ENCODE measurements at regions of chr19 and their contacts with region 1.

Region 1: DNA sequence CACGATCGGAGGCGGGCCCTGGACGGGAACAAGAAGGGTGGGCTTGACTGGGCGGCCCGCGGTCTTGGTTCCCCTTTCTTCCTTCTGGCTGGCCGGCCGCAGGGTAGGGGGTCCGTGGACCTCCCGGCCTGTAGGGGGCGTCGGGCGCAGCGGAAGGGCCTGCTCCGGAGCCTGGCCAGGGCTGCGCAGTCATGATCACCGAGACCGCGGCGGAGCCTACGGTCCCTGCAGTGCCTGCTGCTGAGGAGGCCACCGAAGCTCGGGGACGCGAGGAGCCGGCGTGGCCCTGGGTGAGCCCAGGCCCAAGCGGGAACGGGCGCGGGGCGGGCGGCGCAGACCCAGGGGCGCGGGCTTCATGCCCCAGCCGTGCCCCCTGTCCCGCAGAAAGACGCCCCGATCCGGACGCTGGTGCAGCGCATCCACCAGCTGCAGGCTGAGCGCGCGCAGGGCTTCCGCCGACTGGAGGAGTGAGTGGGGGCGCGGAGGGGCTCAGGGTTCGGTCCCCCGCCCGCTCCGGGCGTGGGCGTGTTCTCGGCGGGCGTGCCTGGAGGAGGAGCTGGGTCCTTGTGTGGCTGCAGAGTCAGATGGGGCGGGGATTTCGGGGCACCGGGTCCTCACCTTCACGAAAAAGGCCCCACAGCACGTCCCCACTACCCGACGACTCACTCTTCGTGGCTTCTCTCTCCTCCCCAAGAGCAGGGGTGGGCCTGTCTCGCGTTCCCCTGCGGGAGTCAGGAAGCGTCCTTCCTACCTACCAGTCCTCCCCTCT is at the start of gene REX1BD:
- DNase-seq: peak; percentile 83
- H3K4me3 Mint-ChIP-seq: peak within 1 kb of the TSS; percentile 85
- H3K27ac Mint-ChIP-seq: peak within 1 kb of the TSS; percentile 90
- H3K4me1 Mint-ChIP-seq: peaks cover 49% of the 10 kb centered on the region
- H3K27me3 Mint-ChIP-seq: peaks cover 2% of the 10 kb centered on the region
- total RNA-seq, gene REX1BD: 81.2 to 83.3 TPM

Region 2: GRCh38 chr19:18259893-18260292 is 328.9 kb before region 1 on chr19:
- CTCF ChIA-PET with region 1: no interaction called
- POLR2A ChIA-PET with region 1: no interaction called
- DNase-seq: no peak
- H3K4me3 Mint-ChIP-seq: no peak overlapping the region
- H3K27ac Mint-ChIP-seq: no peak overlapping the region
- H3K4me1 Mint-ChIP-seq: peaks cover 2% of the 10 kb centered on the region
- H3K27me3 Mint-ChIP-seq: peaks cover 3% of the 10 kb centered on the region

Region 3: GRCh38 chr19:18419195-18419698 is 169.5 kb before region 1 on chr19 and contains the start of gene SSBP4:
- CTCF ChIA-PET with region 1: no interaction called
- POLR2A ChIA-PET with region 1: no interaction called
- DNase-seq: peak; percentile 79
- H3K4me3 Mint-ChIP-seq: peak within 1 kb of the TSS; percentile 94
- H3K27ac Mint-ChIP-seq: peak within 1 kb of the TSS; percentile 91
- H3K4me1 Mint-ChIP-seq: peaks cover 84% of the 10 kb centered on the region
- H3K27me3 Mint-ChIP-seq: peaks cover 11% of the 10 kb centered on the region
- total RNA-seq, gene SSBP4: 140 to 153 TPM

Region 4: GRCh38 chr19:18469069-18469846 is 119.5 kb before region 1 on chr19:
- CTCF ChIA-PET with region 1: interaction called, 20 read pairs
- POLR2A ChIA-PET with region 1: interaction called, 7 read pairs
- DNase-seq: peak; percentile 68
- H3K4me3 Mint-ChIP-seq: no peak overlapping the region
- H3K27ac Mint-ChIP-seq: no peak overlapping the region
- H3K4me1 Mint-ChIP-seq: peaks cover 26% of the 10 kb centered on the region
- H3K27me3 Mint-ChIP-seq: no peaks in the 10 kb centered on the region

Region 5: GRCh38 chr19:18521885-18522624 is 66.7 kb before region 1 on chr19 and contains the start of gene ELL:
- CTCF ChIA-PET with region 1: interaction called, 44 read pairs
- POLR2A ChIA-PET with region 1: interaction called, 51 read pairs
- DNase-seq: peak; percentile 100
- H3K4me3 Mint-ChIP-seq: peak within 1 kb of the TSS; percentile 93
- H3K27ac Mint-ChIP-seq: peak within 1 kb of the TSS; percentile 87
- H3K4me1 Mint-ChIP-seq: peaks cover 18% of the 10 kb centered on the region
- H3K27me3 Mint-ChIP-seq: no peaks in the 10 kb centered on the region
- total RNA-seq, gene ELL: 26.2 to 26.3 TPM

Region 6: DNA sequence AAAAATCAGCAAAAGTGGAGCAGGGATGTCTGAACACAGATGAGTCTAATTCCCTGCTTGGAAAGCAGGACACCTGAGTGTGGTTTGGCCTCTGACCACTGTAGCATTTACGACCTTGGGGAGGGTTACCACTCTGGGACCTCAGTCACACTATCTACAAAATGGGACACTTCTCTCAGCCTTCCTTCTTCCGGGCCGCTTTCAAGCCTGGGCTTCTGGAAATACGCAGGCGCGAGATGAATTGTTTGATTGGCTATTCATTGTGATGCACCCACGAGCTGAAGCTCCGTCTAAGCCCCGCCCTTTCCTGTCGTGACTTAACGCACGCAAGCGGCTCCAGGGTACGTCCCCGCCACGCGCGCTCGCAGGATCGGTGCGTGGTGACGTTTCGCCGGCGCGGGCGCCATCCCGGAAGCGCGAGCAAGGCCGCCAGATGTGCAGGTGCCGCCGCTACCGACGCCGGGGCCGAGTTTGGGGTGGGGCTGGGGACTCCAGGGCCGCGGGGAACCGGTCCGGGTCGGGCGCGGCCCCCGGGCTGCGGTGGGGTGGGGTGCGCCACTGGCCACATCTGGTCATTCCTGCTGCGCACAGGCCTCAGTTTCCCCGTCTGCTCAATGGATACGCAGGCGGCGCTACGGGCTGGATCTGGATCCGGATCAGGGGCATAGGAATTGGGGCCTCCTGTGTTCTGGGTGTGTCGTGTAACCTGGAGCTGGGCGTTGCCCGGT is 31.2 kb before region 1 on chr19 and contains the start of gene KXD1:
- CTCF ChIA-PET with region 1: interaction called, 7 read pairs
- POLR2A ChIA-PET with region 1: interaction called, 47 read pairs
- DNase-seq: peak; percentile 99
- H3K4me3 Mint-ChIP-seq: peak within 1 kb of the TSS; percentile 95
- H3K27ac Mint-ChIP-seq: peak within 1 kb of the TSS; percentile 87
- H3K4me1 Mint-ChIP-seq: peaks cover 22% of the 10 kb centered on the region
- H3K27me3 Mint-ChIP-seq: no peaks in the 10 kb centered on the region
- total RNA-seq, gene KXD1: 93.0 to 99.1 TPM

Region 7: DNA sequence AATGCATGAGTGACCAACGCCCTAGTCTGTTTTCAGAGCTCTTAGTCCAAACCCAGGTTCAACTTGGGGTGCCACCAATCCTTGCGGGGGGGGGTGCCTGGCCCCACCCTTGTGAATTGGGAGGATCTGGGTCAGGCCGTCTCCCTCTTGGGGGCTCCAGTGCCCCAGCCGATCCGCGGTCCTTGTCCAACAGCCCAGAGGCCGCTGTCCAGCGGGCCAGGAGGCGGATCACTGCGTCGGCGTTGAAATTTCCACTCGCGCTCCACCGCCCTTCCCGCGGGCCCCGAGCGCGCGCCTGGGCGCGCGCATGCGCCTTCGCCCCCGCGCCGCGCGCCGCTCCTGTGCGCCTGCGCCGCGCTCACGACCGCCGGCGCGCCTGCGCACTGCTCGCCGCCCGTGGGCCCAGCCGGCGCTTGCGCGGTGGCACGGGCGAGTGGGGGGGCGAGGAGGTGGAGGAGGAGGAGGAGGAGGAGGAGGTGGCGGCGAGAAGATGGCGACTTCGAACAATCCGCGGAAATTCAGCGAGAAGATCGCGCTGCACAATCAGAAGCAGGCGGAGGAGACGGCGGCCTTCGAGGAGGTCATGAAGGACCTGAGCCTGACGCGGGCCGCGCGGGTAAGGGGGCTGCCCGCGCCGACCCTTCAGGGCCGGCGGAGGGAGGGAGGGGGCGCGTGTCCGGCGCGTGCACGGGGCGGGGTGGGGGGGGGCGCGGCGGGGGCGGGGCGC is 94.6 kb after region 1 on chr19 and contains the start of gene CRTC1:
- CTCF ChIA-PET with region 1: no interaction called
- POLR2A ChIA-PET with region 1: no interaction called
- DNase-seq: peak; percentile 94
- H3K4me3 Mint-ChIP-seq: peak within 1 kb of the TSS; percentile 82
- H3K27ac Mint-ChIP-seq: peak within 1 kb of the TSS; percentile 75
- H3K4me1 Mint-ChIP-seq: peaks cover 22% of the 10 kb centered on the region
- H3K27me3 Mint-ChIP-seq: no peaks in the 10 kb centered on the region
- total RNA-seq, gene CRTC1: 5.3 TPM

Region 8: DNA sequence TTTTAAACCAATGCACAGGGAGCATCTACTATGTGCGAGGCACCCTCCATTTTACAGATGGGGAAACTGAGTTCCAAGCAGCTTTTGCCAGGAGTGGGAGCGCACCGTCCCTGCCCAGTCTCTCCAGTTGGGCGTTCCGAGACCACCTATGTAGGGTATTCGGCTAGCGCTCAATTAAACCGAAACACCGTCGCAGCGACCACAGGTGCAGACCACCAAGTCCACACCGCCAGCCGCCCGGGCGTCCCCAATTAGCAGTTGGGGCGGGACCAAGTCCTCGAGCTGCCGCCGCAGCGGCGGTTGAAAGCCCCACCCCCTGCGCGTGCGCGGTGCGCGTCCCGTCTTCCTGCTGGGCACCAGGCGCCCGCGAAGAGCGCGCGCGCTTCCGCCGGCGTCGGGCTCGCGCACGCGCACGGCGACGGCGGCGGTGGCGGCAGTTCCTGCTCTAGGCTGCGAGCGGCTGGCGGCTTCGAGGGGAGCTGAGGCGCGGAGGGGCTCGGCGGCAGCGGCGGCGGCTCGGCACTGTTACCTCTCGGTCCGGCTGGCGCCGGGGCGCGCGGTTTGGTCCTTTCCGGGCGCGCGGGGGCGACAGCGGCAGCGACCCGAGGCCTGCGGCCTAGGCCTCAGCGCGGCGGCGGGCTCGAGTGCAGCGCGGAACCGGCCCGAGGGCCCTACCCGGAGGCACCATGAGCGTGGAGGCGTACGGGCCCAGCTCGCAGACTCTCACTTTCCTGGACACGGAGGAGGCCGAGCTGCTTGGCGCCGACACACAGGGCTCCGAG is 242.9 kb after region 1 on chr19 and contains the start of gene UPF1:
- CTCF ChIA-PET with region 1: interaction called, 8 read pairs
- POLR2A ChIA-PET with region 1: interaction called, 10 read pairs
- DNase-seq: peak; percentile 95
- H3K4me3 Mint-ChIP-seq: peak within 1 kb of the TSS; percentile 97
- H3K27ac Mint-ChIP-seq: peak within 1 kb of the TSS; percentile 83
- H3K4me1 Mint-ChIP-seq: peaks cover 40% of the 10 kb centered on the region
- H3K27me3 Mint-ChIP-seq: peaks cover 4% of the 10 kb centered on the region
- total RNA-seq, gene UPF1: 74.4 to 74.6 TPM

Region 9: DNA sequence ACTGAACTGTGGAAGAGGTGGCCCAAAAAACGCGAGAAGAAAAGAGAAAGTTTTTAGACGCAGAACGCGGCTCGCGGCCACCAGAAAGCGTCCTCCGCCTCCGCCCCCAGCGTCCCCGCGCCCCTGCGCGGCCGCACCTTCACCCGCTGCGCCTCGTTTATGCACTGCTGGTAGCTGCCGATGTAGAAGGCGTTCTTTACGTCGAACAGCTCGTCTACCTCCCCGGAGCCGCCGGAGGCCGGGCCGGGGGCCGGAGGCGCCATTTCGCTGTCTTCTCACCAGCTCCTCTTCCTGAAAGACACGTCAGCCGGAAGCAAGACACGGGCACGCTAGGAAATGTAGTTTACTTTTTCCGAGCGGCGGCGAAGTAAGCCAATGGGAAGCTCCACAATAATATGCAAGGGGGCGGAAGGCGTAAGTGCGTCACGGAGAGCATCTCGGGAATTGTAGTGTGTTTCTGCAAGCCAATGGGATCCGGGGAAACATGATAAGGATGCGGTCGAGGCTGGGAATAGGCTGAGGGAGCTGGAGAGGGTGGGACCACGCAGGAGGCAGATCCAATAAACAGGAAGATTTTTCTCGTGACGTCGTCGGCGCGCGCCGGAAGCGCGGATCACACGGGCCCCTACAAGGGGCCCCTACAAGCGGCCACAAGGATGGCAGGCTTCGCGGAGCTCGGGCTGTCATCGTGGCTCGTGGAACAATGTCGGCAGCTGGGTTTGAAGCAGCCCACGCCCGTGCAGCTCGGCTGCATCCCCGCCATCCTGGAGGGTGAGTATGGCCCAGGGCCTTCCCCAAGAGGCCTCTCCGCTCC is 330.5 kb after region 1 on chr19 and contains the starts of genes COPE and DDX49:
- CTCF ChIA-PET with region 1: interaction called, 9 read pairs
- POLR2A ChIA-PET with region 1: interaction called, 14 read pairs
- DNase-seq: peak; percentile 99
- H3K4me3 Mint-ChIP-seq: peak within 1 kb of the TSS; percentile 97
- H3K27ac Mint-ChIP-seq: peak within 1 kb of the TSS; percentile 88
- H3K4me1 Mint-ChIP-seq: peaks cover 46% of the 10 kb centered on the region
- H3K27me3 Mint-ChIP-seq: no peaks in the 10 kb centered on the region
- total RNA-seq, gene COPE: 274 to 278 TPM
- total RNA-seq, gene DDX49: 34.0 to 36.2 TPM

Measured in activated CD4-positive, alpha-beta memory T cell treated with anti-CD3 and anti-CD28 coated beads, Interleukin-2, amount 10 ng/mL, durations not matched to agents 7 days and 5 days (primary cell).